Vagina (tissue), 2 donors: ENCODE measurements at regions of chr18 and their contacts with region 1.

Region 1: GRCh38 chr18:616380-616995 is 19.7 kb downstream of the CLUL1 start:
- DNase-seq: no peak
- H3K4me3 ChIP-seq: no peak overlapping the region
- H3K27ac ChIP-seq: no peak overlapping the region
- H3K4me1 ChIP-seq: no peaks in the 10 kb centered on the region
- H3K27me3 ChIP-seq: no peaks in the 10 kb centered on the region
- CTCF ChIP-seq: peak; percentile 52 to 73 (median 59)
- POLR2A ChIP-seq: no peak

Region 2: GRCh38 chr18:286515-287310 is 329.8 kb before region 1 on chr18:
- intact Hi-C with region 1: loop called (anchors 10 kb)
- DNase-seq: no peak
- H3K4me3 ChIP-seq: no peak overlapping the region
- H3K27ac ChIP-seq: no peak overlapping the region
- H3K4me1 ChIP-seq: no peaks in the 10 kb centered on the region
- H3K27me3 ChIP-seq: no peaks in the 10 kb centered on the region
- CTCF ChIP-seq: no peak
- POLR2A ChIP-seq: no peak

Region 3: GRCh38 chr18:335733-336132 is 280.8 kb before region 1 on chr18:
- intact Hi-C with region 1: no loop called
- DNase-seq: no peak
- H3K4me3 ChIP-seq: no peak overlapping the region
- H3K27ac ChIP-seq: no peak overlapping the region
- H3K4me1 ChIP-seq: peaks cover 6% of the 10 kb centered on the region
- H3K27me3 ChIP-seq: no peaks in the 10 kb centered on the region
- CTCF ChIP-seq: no peak
- POLR2A ChIP-seq: no peak